Heart right ventricle (tissue), 16 donors: ENCODE measurements at regions of chr10 and their contacts with region 1.

Region 1: GRCh38 chr10:79562135-79562756 is 2.0 kb upstream of the SFTPA2 start:
- DNase-seq: peak; percentile 65 to 66
- ATAC-seq: peak; percentile 58 to 89 (median 74)
- H3K4me3 ChIP-seq: peak overlapping the region in 4 of 10 donors; percentile 2 to 26 (median 13)
- H3K27ac ChIP-seq: no peak overlapping the region
- H3K4me1 ChIP-seq: peaks cover 0 to 6% (median 0%) of the 10 kb centered on the region in 9 donors
- H3K27me3 ChIP-seq: peaks cover 0 to 16% (median 0%) of the 10 kb centered on the region in 7 donors
- CTCF ChIP-seq: peak; percentile 50 to 87 (median 81)

Region 2: DNA sequence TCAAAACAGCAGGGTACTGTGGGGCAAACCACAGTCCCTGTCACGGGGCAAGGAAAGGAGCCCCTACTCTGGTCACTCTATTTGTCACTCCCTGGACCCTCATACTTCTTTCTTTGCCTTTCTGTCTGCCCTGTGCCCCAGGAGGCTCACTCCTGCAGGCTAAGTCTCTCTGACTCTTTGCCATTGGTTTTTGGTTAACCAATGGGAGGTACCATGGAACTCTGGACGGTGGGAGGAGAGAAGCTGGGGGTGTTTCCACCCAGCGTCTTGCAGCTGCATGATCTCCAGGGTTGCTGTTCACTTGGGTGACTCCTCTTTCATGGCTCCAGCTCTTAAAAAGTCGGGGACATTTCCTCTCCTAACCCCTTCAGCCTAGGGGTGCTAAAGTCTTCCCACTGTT is 65.3 kb before region 1 on chr10:
- intact Hi-C with region 1: no loop called
- DNase-seq: no peak
- ATAC-seq: no peak
- H3K4me3 ChIP-seq: no peak overlapping the region
- H3K27ac ChIP-seq: no peak overlapping the region
- H3K4me1 ChIP-seq: no peaks in the 10 kb centered on the region
- H3K27me3 ChIP-seq: peaks cover 0 to 32% (median 9%) of the 10 kb centered on the region in 7 donors
- CTCF ChIP-seq: no peak

Region 3: GRCh38 chr10:79608505-79609375 is 46.5 kb after region 1 on chr10:
- intact Hi-C with region 1: loop called in 1 of 10 experiments (anchors 5 kb)
- DNase-seq: peak in 1 of 2 donors; percentile 38
- ATAC-seq: peak in 2 of 8 donors; percentile 46 to 58
- H3K4me3 ChIP-seq: no peak overlapping the region
- H3K27ac ChIP-seq: no peak overlapping the region
- H3K4me1 ChIP-seq: no peaks in the 10 kb centered on the region
- H3K27me3 ChIP-seq: no peaks in the 10 kb centered on the region
- CTCF ChIP-seq: peak; percentile 25 to 65 (median 56)

Region 4: DNA sequence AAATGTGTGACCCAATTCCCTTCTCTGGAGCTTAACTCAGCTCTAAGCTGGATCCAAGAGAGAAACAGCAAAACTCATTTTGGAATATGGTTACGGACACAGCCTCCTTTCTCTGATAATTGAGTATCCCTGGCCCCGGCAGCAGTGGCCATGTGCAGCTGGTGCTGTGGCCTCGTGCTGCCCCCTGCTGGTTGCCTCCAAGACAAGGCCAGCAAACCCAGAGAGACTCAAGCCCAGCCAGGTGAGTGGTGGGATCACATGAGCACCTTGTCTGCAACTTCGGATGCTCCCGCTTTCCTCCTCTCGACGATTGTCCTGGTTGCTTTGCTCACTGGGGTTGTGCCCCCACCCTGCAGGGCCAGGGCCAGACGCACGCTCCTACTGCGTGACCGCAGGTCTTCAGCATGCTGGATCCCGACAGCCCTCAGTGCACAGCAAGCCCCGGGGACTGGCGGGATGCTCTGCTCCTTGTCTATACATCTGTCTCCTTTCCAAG is 367.2 kb after region 1 on chr10:
- intact Hi-C with region 1: loop called in 8 of 10 experiments (anchors 1 to 10 kb)
- DNase-seq: peak; percentile 76 to 83
- ATAC-seq: peak; percentile 74 to 93 (median 89)
- H3K4me3 ChIP-seq: no peak overlapping the region
- H3K27ac ChIP-seq: no peak overlapping the region
- H3K4me1 ChIP-seq: peaks cover 0 to 31% (median 15%) of the 10 kb centered on the region in 9 donors
- H3K27me3 ChIP-seq: peaks cover 0 to 18% (median 0%) of the 10 kb centered on the region in 7 donors
- CTCF ChIP-seq: peak; percentile 90 to 98 (median 96)

Region 5: DNA sequence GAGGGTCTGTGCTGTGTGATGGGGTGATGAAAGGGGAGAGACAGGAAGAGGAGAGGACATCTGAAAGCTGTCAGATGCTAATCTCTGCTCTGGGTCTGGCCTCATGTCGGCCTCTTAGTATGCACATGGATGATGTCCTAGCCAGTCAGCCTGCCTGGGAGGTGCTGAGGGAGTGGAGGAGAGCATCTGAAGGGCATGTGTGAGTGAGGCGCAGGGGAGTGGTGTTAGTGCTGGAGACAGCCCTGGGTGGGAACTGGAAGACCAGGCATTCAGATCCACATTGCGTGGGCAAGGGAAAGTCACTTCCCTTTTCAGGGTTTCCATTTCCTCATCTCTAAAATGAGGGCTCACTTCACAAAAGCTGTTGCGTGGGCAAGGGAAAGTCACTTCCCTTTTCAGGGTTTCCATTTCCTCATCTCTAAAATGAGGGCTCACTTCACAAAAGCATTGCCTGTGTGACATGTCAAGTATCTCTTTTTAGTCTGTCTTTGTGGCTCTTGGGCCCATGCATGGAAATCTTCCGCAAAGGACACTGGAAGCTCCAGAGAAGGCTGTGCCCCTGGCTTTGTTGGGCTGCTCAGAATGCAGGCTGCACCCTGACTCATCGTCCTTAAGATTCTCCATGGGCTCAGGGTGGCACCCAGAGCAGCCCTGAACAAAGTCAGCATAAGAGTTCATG is 376.6 kb after region 1 on chr10:
- intact Hi-C with region 1: loop called in 4 of 10 experiments (anchors 10 kb)
- DNase-seq: peak in 1 of 2 donors; percentile 54
- ATAC-seq: peak in 7 of 8 donors; percentile 66 to 87 (median 75)
- H3K4me3 ChIP-seq: no peak overlapping the region
- H3K27ac ChIP-seq: peak overlapping the region in 1 of 10 donors; percentile 80
- H3K4me1 ChIP-seq: peaks cover 0 to 31% (median 0%) of the 10 kb centered on the region in 9 donors
- H3K27me3 ChIP-seq: no peaks in the 10 kb centered on the region
- CTCF ChIP-seq: no peak